ENCODE measurements at regions of chr7 and their contacts with region 1.

Region 1: DNA sequence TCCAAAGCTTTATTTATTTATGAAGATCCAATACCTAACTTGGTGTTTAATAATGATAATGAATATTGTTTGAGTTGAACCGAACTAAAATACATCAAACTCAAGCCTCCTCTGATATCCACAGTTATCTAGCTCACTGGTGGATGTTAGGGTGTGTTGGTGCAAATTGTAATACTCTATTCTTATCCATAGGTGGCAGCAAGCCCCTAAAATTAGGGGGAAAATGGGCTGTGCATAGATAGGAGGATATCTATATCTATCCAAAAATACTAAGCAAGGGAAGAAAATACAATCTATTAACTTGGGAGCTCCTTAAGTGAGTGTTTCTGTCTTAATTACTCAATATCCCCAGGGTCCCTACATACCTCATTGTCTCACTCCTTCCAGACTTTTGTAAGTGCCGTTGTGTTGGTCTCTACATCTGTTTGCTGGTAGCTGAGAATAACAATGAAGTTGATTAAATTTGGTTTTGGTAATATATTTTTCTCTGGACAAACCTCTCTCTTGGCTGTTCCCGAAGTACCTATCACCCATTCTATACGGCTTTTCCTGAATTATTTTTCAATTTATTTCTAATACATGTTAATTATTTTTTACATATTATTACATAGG is 55.0 kb upstream of the VWDE start:
- DNase-seq: peak; percentile 23
- ATAC-seq: peak; percentile 90
- H3K4me3 Mint-ChIP-seq: no peak overlapping the region
- H3K27ac Mint-ChIP-seq: no peak overlapping the region
- H3K4me1 Mint-ChIP-seq: no peaks in the 10 kb centered on the region
- H3K27me3 Mint-ChIP-seq: no peaks in the 10 kb centered on the region

Region 2: GRCh38 chr7:11969643-11970042 is 489.0 kb before region 1 on chr7:
- CTCF ChIA-PET with region 1: no interaction called
- POLR2A ChIA-PET with region 1: no interaction called
- DNase-seq: no peak
- ATAC-seq: no peak
- H3K4me3 Mint-ChIP-seq: no peak overlapping the region
- H3K27ac Mint-ChIP-seq: no peak overlapping the region
- H3K4me1 Mint-ChIP-seq: no peaks in the 10 kb centered on the region
- H3K27me3 Mint-ChIP-seq: no peaks in the 10 kb centered on the region

Region 3: GRCh38 chr7:12369756-12370155 is 88.9 kb before region 1 on chr7:
- CTCF ChIA-PET with region 1: no interaction called
- POLR2A ChIA-PET with region 1: no interaction called
- DNase-seq: no peak
- ATAC-seq: no peak
- H3K4me3 Mint-ChIP-seq: no peak overlapping the region
- H3K27ac Mint-ChIP-seq: no peak overlapping the region
- H3K4me1 Mint-ChIP-seq: no peaks in the 10 kb centered on the region
- H3K27me3 Mint-ChIP-seq: no peaks in the 10 kb centered on the region

Region 4: DNA sequence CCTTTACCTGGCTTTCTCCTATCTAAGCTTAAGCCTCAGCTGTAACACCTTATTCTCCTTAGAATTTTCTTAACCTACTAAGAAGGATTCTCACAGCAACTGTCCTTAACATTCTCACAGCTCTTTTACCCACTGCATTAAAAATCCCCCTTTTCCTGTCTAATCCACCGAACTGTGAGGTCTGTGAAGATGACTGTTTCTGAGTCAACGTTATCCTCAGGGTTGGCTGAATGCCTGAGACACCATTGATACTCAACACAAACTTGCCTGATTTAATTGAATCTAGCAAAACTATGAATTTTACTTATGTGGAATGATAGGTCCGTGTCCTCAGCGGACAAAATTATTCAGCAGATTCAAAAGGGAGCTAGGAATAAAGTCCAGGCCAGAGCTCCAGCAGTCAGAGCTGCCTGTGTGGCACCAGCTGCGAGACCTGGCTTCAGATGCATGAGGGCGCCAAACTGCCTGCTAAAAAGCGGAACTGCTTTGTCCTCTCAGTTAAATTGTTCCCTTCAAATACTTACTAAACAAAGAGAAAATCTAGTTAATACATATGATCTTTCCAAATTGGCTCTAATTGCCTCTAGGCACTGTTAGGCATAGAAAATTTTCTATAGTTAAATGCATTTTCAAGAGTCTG is 21.6 kb before region 1 on chr7:
- CTCF ChIA-PET with region 1: interaction called, 13 read pairs
- POLR2A ChIA-PET with region 1: no interaction called
- DNase-seq: no peak
- ATAC-seq: no peak
- H3K4me3 Mint-ChIP-seq: no peak overlapping the region
- H3K27ac Mint-ChIP-seq: no peak overlapping the region
- H3K4me1 Mint-ChIP-seq: no peaks in the 10 kb centered on the region
- H3K27me3 Mint-ChIP-seq: peaks cover 6% of the 10 kb centered on the region

Region 5: DNA sequence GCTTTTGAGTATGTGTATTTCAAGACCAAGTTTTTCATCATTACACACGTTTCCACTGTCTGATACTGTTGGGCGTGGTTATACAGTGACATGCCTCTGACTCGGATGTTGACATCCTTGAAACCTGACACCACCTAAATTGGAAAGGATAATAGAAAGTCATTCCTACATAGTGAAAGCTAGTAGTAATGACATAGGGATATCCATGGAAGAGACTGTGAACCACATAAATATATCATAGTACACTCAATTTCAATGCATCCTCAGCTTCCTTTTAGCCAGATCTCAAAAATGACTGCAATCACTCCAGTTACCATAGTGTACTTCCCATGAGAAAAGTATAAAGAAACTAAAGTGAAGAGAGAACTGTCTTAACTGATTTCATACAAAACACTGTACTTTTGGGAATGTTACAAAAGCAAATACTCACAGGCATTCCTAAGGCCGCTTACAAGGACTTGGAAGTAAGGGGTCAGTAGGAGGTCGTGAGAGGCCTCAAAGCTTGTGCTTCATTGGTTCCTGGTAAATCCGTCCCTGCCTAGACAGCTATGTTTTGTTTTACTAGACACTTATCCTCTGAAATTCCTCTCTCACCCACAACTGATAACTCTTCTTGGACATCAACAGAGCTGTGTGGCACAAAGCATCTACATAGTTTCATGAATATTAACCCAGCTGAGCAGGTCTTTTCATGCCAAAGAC is 16.9 kb after region 1 on chr7:
- CTCF ChIA-PET with region 1: interaction called, 21 read pairs
- POLR2A ChIA-PET with region 1: no interaction called
- DNase-seq: no peak
- ATAC-seq: no peak
- H3K4me3 Mint-ChIP-seq: no peak overlapping the region
- H3K27ac Mint-ChIP-seq: no peak overlapping the region
- H3K4me1 Mint-ChIP-seq: no peaks in the 10 kb centered on the region
- H3K27me3 Mint-ChIP-seq: no peaks in the 10 kb centered on the region

Region 6: GRCh38 chr7:12490117-12490688 is 31.6 kb after region 1 on chr7:
- CTCF ChIA-PET with region 1: interaction called, 63 read pairs
- POLR2A ChIA-PET with region 1: no interaction called
- DNase-seq: no peak
- ATAC-seq: no peak
- H3K4me3 Mint-ChIP-seq: no peak overlapping the region
- H3K27ac Mint-ChIP-seq: no peak overlapping the region
- H3K4me1 Mint-ChIP-seq: no peaks in the 10 kb centered on the region
- H3K27me3 Mint-ChIP-seq: peaks cover 6% of the 10 kb centered on the region